PC-3 (cell line): ENCODE measurements at regions of chr15 and their contacts with region 1.

Region 1: DNA sequence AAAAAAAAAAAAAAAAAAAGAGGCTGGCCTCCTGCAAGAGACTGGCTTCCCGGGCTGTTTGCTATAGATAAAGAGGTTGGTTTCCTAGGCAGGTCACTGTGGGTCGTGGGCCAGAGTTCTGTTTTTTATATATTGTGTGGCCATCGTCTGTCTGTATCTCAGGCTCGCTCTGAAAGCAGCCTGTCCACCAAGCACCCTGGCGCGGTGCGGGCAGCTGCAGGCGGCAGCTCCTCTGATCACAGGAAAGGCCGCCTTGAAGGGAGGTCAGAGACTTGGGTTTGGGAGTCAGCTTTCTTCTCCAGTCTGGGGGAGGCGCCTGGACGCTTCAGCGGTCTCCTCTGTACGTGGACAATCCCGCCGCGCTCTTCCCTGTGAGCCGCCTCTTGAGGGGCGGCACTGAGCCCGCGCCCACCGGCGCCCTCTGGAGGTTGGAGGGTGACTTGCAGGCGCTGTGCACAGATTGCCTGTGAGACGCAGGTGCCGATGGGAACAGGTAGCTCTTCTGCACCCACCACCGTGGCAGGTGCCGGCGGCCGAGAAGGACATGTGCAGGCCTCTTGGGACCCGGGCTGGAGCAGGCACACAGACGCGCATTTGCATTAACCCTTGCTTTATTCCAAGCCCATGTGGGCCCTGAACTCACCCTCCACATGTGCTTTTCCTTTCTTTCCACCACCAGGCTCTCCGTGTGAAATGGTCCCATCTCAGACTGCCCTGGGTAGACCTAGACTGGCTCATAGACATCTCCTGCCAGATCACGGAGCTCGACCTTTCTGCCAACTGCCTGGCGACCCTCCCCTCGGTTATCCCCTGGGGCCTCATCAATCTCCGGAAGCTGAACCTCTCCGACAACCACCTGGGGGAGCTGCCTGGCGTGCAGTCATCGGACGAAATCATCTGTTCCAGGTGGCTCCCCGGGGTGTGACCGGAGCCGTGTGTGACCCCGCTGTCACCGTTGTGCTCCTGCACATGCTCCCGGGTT is 89.3 kb downstream of the LRRK1 start:
- DNase-seq: peak; percentile 91
- ATAC-seq: peak; percentile 77
- H3K4me3 ChIP-seq: peak overlapping the region; percentile 70
- H3K27ac ChIP-seq: no peak overlapping the region
- H3K4me1 ChIP-seq: peaks cover 14% of the 10 kb centered on the region
- H3K27me3 ChIP-seq: no peaks in the 10 kb centered on the region
- CTCF ChIP-seq: peak; percentile 90

Region 2: DNA sequence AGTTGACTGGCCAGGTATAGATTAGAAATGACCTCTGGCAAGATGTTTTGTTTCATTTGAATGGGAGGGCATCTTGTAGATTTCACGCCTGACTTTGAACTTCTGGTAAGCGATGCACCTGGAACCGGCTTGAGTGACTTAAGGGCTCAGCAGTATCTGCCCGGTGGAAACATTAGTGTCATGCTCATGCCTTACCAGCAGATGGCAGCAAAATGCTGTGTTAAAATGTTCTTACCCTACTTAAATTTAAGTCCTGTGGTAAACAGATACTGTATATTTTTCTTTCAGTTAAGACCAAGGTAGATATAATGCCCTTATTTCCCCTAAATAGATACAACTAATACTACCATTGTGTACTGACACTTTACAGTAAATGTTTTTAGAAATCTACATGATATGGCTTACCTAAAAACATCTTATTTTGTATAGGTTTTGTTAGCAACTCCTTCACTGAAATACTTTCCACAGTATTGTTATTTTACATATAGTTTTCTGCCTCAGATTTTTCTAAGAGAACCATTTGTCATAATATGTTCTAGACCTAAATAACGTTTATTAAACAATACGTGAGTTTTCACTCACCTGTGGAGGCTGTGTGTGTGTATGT is 380.6 kb before region 1 on chr15:
- CTCF ChIA-PET with region 1: interaction called, 4 read pairs
- POLR2A ChIA-PET with region 1: no interaction called
- intact Hi-C with region 1: loop called (anchors 1 kb)
- DNase-seq: peak; percentile 93
- ATAC-seq: peak; percentile 79
- H3K4me3 ChIP-seq: no peak overlapping the region
- H3K27ac ChIP-seq: peak overlapping the region; percentile 85
- H3K4me1 ChIP-seq: peaks cover 30% of the 10 kb centered on the region
- H3K27me3 ChIP-seq: no peaks in the 10 kb centered on the region
- CTCF ChIP-seq: peak; percentile 83

Region 3: DNA sequence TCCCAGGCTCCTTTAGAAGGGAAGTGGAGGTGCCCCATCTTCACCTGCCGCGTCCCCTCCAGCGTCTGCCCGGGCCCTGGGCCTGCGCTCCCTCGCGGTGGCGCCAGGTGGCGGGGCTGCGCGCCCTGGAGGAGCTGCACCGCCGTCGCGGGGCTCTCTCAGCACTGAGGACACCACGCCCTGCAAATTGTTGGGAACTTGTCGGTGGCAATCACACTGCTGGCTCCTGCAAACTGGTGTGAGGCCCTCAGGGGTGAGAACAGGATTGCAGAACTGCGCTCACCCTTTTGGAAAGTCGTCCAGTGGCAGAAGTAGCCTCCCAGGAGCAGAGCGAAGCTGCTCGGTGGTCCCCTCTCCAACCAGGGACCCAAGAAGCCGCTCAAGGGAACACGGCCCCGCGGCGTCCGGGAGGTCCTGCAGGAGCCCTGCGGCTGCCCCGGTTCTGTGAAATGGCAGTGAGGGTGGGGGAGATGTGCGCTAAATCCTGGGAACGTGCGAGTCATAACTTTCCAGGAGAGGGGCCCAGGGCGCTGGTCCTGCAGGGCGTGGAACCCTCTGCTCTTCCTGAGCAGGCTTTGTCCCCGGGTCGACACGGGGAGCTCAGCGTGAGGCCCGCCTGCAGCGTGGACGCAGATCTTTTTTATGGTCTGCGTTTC is 90.3 kb before region 1 on chr15:
- CTCF ChIA-PET with region 1: interaction called, 18 read pairs
- POLR2A ChIA-PET with region 1: interaction called, 3 read pairs
- intact Hi-C with region 1: loop called (anchors 1 kb)
- DNase-seq: peak; percentile 89
- ATAC-seq: peak; percentile 66
- H3K4me3 ChIP-seq: peak overlapping the region; percentile 70
- H3K27ac ChIP-seq: peak overlapping the region; percentile 76
- H3K4me1 ChIP-seq: peaks cover 33% of the 10 kb centered on the region
- H3K27me3 ChIP-seq: no peaks in the 10 kb centered on the region
- CTCF ChIP-seq: peak; percentile 91

Region 4: DNA sequence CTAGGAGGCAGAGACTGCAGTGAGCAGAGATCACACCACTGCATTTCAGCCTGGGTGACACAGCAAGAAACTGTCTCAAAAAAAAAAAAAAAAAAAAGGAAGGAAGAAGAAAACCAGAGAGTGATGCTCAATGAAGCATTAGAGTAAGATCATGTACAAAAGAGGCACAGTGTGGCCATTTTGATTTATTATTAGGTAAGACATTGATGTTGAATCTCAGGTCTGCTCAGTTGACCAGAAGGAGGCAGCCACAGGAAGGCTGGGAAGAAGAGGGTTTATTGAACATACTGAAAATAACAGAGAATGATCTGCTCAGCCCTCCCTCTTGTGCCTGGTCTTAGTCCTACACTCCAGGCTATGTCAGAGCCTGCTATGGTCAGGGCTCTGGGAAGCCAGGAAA is 73.7 kb before region 1 on chr15:
- CTCF ChIA-PET with region 1: interaction called, 3 read pairs
- POLR2A ChIA-PET with region 1: no interaction called
- intact Hi-C with region 1: loop called (anchors 5 kb)
- DNase-seq: peak; percentile 16
- ATAC-seq: peak; percentile 49
- H3K4me3 ChIP-seq: no peak overlapping the region
- H3K27ac ChIP-seq: no peak overlapping the region
- H3K4me1 ChIP-seq: peaks cover 4% of the 10 kb centered on the region; the same call in 1 of the 2 replicates
- H3K27me3 ChIP-seq: no peaks in the 10 kb centered on the region
- CTCF ChIP-seq: peak; percentile 36